Esophagus squamous epithelium (tissue), 5 donors: ENCODE measurements at regions of chr5 and their contacts with region 1.

Region 1: GRCh38 chr5:149551200-149552037 is at the start of gene CSNK1A1:
- DNase-seq: peak; percentile 84
- H3K4me3 ChIP-seq: peak within 1 kb of the TSS; percentile 77 to 89 (median 82)
- H3K27ac ChIP-seq: peak within 1 kb of the TSS; percentile 97 to 99 (median 99)
- H3K4me1 ChIP-seq: peaks cover 14 to 41% (median 29%) of the 10 kb centered on the region in 3 donors
- H3K27me3 ChIP-seq: no peaks in the 10 kb centered on the region
- CTCF ChIP-seq: peak; percentile 40 to 93 (median 82)
- POLR2A ChIP-seq: peak in 3 of 4 donors; percentile 91 to 98 (median 92)
- total RNA-seq, gene CSNK1A1: 223 to 388 (median 301) TPM

Region 2: GRCh38 chr5:149442563-149443182 is 108.7 kb before region 1 on chr5:
- intact Hi-C with region 1: loop called (anchors 5 kb)
- DNase-seq: no peak
- H3K4me3 ChIP-seq: no peak overlapping the region
- H3K27ac ChIP-seq: peak overlapping the region; percentile 86 to 93 (median 92)
- H3K4me1 ChIP-seq: peaks cover 33 to 83% (median 79%) of the 10 kb centered on the region in 3 donors
- H3K27me3 ChIP-seq: no peaks in the 10 kb centered on the region
- CTCF ChIP-seq: peak; percentile 79 to 99 (median 96)
- POLR2A ChIP-seq: peak in 1 of 4 donors; percentile 5

Region 3: DNA sequence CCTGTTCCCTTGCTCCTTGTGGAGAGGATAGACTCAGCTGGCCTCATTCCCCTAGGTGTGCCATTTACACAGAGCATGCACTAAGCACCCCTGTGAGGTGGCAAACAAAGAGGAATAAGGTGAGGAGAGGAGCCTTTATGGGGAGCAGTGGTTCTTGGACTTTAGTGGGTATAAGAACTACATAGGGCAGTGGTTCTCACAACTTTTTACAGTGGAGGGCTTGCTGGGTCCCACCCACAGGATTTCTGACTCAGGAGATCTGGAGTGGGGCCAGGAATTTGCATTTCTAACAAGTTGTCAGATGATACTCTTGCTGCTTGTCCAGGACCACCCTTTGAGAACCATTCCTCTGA is 492.9 kb after region 1 on chr5:
- intact Hi-C with region 1: no loop called
- DNase-seq: no peak
- H3K4me3 ChIP-seq: no peak overlapping the region
- H3K27ac ChIP-seq: no peak overlapping the region
- H3K4me1 ChIP-seq: peaks cover 0 to 16% (median 7%) of the 10 kb centered on the region in 3 donors
- H3K27me3 ChIP-seq: no peaks in the 10 kb centered on the region
- CTCF ChIP-seq: no peak
- POLR2A ChIP-seq: no peak